H1 (cell line): ENCODE measurements at regions of chr4 and their contacts with region 1.

Region 1: DNA sequence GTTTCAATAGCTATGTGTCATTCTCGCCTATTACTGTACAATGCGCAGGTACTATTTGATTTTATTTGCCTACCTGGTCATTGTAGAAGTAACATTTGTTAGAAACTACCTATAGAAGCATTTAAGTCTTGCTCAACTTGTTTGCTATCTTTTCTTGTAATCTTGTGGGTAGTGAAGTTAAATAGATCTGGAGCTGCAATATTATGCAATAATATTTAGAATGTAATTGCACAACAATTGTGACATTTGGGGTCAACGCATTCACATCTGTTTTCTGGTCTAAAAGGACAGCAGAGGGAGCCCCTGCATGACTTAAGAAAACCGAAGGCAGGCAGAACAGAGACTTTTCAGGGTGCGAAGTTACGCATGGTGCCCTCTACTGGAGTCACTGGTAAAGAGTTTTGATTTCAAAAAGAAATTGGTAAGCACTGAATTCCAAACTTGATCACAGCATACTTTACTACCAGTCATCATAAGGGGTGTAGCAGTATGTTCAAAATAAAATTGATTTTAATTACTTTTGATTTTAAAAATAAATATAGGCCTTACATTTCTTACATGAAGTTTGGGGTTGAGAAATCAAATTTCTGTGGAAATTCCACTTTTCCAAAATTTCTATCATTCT is 503.2 kb upstream of the FAM241A start:
- DNase-seq: peak; percentile 47 to 51
- H3K4me3 ChIP-seq: no peak overlapping the region
- H3K27ac ChIP-seq: no peak overlapping the region
- H3K4me1 ChIP-seq: no peaks in the 10 kb centered on the region
- H3K27me3 ChIP-seq: no peaks in the 10 kb centered on the region
- CTCF ChIP-seq: peak; percentile 26 to 99 (median 89)
- EP300 ChIP-seq: no peak
- POLR2A ChIP-seq: no peak
- RAD21 ChIP-seq: peak; percentile 91

Region 2: GRCh38 chr4:111631215-111631999 is 10.7 kb before region 1 on chr4:
- CTCF ChIA-PET with region 1: interaction called, 10 read pairs
- POLR2A ChIA-PET with region 1: no interaction called
- DNase-seq: no peak
- H3K4me3 ChIP-seq: no peak overlapping the region
- H3K27ac ChIP-seq: no peak overlapping the region
- H3K4me1 ChIP-seq: no peaks in the 10 kb centered on the region
- H3K27me3 ChIP-seq: no peaks in the 10 kb centered on the region
- CTCF ChIP-seq: peak in 2 of 3 experiments; percentile 20 to 50; a peak in 2 of 4 replicates
- EP300 ChIP-seq: no peak
- POLR2A ChIP-seq: no peak
- RAD21 ChIP-seq: peak; percentile 38 to 41

Region 3: DNA sequence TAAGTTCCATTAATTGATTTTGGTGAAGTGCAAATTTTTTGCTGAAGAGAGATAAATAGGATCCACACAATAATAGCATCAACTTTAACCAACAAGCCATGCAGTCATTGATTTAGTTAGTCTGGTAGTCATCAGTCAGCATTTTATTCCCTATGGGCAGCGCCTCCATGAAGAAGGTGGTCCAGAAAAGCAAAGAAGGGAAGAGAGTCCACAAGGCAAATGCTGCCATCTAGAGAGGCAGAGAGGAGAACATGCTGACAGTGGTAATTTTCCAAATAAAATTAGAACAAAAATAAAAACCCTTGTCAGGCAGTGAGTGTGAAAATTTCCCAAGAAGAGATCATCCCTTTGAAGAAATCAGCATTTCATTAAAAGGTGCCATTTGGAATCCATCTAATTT is 136.5 kb after region 1 on chr4:
- CTCF ChIA-PET with region 1: interaction called, 11 read pairs
- POLR2A ChIA-PET with region 1: no interaction called
- DNase-seq: no peak
- H3K4me3 ChIP-seq: no peak overlapping the region
- H3K27ac ChIP-seq: no peak overlapping the region
- H3K4me1 ChIP-seq: peaks cover 0 to 5% (median 0%) of the 10 kb centered on the region in 4 experiments; a peak in 1 of 7 replicates
- H3K27me3 ChIP-seq: no peaks in the 10 kb centered on the region
- CTCF ChIP-seq: peak in 2 of 3 experiments; percentile 51 to 60; a peak in 3 of 4 replicates
- EP300 ChIP-seq: no peak
- POLR2A ChIP-seq: no peak
- RAD21 ChIP-seq: peak; percentile 67 to 76

Region 4: DNA sequence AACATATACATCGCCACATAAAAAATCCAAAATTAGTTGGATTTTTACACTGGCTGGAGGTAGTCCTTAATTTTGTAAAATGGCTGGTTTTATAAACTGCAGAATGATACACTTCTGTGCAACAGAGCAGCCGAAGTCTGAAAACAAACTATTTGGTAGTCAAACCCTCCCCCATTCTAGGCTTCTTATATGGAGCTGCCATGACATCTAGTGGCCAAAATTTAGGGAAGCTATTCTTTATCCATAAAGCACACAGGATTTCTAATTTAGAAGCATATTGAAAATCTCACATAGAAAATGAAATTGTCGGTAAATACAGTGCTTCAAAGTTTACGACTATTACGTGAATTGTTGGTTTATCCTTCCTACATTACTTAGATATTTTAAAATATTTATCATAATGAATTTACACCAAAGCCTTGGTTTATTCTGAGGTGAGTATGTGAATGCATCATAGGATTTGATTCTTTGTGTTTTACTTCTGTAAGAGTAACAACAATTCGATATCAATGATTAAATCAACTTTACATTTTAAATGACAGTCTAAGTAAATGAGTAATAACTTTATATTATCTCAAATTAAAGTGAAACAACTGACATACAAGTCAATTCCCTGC is 389.8 kb after region 1 on chr4:
- CTCF ChIA-PET with region 1: interaction called, 21 read pairs
- POLR2A ChIA-PET with region 1: no interaction called
- DNase-seq: no peak
- H3K4me3 ChIP-seq: no peak overlapping the region
- H3K27ac ChIP-seq: no peak overlapping the region
- H3K4me1 ChIP-seq: no peaks in the 10 kb centered on the region
- H3K27me3 ChIP-seq: no peaks in the 10 kb centered on the region
- CTCF ChIP-seq: peak in 2 of 3 experiments; percentile 67 to 70; a peak in 3 of 4 replicates
- EP300 ChIP-seq: no peak
- POLR2A ChIP-seq: no peak
- RAD21 ChIP-seq: peak; percentile 92 to 93